ENCODE measurements at regions of chr20 and their contacts with region 1.

Region 1: DNA sequence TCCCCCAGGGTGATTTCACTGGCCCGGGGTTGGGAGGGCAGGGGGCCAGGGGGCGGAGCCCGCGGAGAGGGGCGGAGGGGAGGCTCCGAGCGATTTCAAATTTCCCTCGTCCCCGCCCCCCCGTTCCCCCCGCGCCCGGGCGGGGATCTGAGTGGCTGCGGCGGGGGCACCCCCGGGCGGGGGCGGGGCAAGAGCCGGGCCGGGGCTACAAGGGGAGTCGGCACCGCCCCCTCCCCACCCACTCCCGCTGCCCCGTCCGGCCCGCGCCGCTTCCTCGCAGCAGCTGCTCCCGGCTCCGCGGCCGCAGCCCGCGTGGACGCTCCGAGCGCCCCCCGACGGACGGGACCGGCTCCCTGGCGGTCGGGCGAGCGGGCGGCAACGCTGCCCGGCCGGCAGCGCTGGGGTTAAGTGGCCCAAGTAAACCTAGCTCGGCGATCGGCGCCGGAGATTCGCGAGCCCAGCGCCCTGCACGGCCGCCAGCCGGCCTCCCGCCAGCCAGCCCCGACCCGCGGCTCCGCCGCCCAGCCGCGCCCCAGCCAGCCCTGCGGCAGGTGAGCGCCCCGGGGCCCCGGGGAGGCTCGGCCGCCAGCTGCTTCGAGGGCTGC is at the start of gene DNMT3B:
- DNase-seq: peak; percentile 73
- ATAC-seq: peak; percentile 95
- H3K4me3 ChIP-seq: peak within 1 kb of the TSS; percentile 90
- H3K27ac ChIP-seq: peak within 1 kb of the TSS; percentile 44; the same call in 1 of the 2 replicates
- H3K4me1 ChIP-seq: peaks cover 5% of the 10 kb centered on the region; the same call in 1 of the 2 replicates
- H3K27me3 ChIP-seq: no peaks in the 10 kb centered on the region
- CTCF ChIP-seq: peak; percentile 46
- POLR2A ChIP-seq: no peak
- RAD21 ChIP-seq: peak; percentile 50
- total RNA-seq, gene DNMT3B: 1.3 and 1.4 TPM in 2 replicates

Region 2: DNA sequence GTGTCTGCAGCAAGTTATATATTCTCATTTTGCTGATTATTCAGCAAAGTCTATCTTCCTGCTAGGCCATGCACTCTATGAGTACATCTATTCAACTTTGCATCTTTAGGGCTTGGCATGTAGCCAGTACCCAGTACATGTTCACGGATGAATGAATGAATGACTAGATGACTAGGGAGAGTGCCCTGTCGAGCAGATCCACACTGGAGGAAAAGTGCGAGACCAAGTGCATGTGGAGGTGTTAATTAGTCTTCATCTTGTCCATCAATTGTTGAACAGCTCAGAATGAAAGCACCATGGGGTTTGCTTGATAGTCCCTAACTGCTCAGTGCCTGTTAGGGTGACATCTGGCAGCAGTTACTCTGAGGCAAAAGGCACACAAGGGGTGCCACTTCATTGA is 622.3 kb before region 1 on chr20:
- CTCF ChIA-PET with region 1: no interaction called
- POLR2A ChIA-PET with region 1: no interaction called
- dilution Hi-C with region 1: no loop called
- in situ Hi-C with region 1: no loop called
- intact Hi-C with region 1: no loop called
- DNase-seq: no peak
- ATAC-seq: no peak
- H3K4me3 ChIP-seq: no peak overlapping the region
- H3K27ac ChIP-seq: no peak overlapping the region
- H3K4me1 ChIP-seq: peaks cover 2% of the 10 kb centered on the region
- H3K27me3 ChIP-seq: no peaks in the 10 kb centered on the region
- CTCF ChIP-seq: no peak
- POLR2A ChIP-seq: no peak
- RAD21 ChIP-seq: no peak

Region 3: GRCh38 chr20:32509639-32510066 is 252.6 kb before region 1 on chr20:
- CTCF ChIA-PET with region 1: no interaction called
- POLR2A ChIA-PET with region 1: no interaction called
- dilution Hi-C with region 1: no loop called
- in situ Hi-C with region 1: no loop called
- intact Hi-C with region 1: loop called (anchors 10 kb)
- DNase-seq: peak; percentile 54
- ATAC-seq: peak; percentile 70
- H3K4me3 ChIP-seq: no peak overlapping the region
- H3K27ac ChIP-seq: no peak overlapping the region
- H3K4me1 ChIP-seq: peaks cover 4% of the 10 kb centered on the region; the same call in 1 of the 2 replicates
- H3K27me3 ChIP-seq: no peaks in the 10 kb centered on the region
- CTCF ChIP-seq: peak; percentile 34
- POLR2A ChIP-seq: no peak
- RAD21 ChIP-seq: peak; percentile 34; the same call in 1 of the 2 replicates

Region 4: DNA sequence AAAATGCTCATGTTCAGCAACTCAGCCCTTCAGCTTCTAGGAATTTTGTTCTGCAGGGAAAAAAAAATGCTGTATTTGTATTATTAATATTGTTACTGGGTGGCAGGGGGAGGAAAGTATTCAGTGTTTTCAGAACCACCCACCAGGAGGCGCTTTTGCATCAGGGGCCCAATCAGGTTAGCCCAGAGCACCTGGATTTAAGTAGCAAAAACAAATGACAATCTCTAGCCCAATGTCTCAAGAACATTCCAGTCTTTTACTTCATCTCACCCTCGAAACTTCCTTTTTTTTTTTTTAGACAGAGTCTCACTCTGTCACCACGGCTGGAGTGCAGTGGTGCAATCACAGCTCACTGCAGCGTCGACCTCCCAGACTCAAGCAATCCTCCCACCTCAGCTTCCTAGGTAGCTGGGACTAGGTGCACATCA is 87.9 kb before region 1 on chr20:
- CTCF ChIA-PET with region 1: interaction called, 4 read pairs
- POLR2A ChIA-PET with region 1: no interaction called
- dilution Hi-C with region 1: no loop called
- in situ Hi-C with region 1: no loop called
- intact Hi-C with region 1: loop called (anchors 5 kb)
- DNase-seq: peak; percentile 50
- ATAC-seq: peak; percentile 78
- H3K4me3 ChIP-seq: no peak overlapping the region
- H3K27ac ChIP-seq: no peak overlapping the region
- H3K4me1 ChIP-seq: no peaks in the 10 kb centered on the region
- H3K27me3 ChIP-seq: peaks cover 2% of the 10 kb centered on the region; the same call in 1 of the 2 replicates
- CTCF ChIP-seq: peak; percentile 88
- POLR2A ChIP-seq: 0 out of 2 replicates have a peak, but pooled peaks have one; percentile 38
- RAD21 ChIP-seq: peak; percentile 96

Region 5: GRCh38 chr20:32681175-32682084 is 80.8 kb before region 1 on chr20:
- CTCF ChIA-PET with region 1: interaction called, 3 read pairs
- POLR2A ChIA-PET with region 1: no interaction called
- dilution Hi-C with region 1: no loop called
- in situ Hi-C with region 1: no loop called
- intact Hi-C with region 1: loop called (anchors 2 kb)
- DNase-seq: peak; percentile 17
- ATAC-seq: peak; percentile 55; the same call in 1 of the 2 replicates
- H3K4me3 ChIP-seq: no peak overlapping the region
- H3K27ac ChIP-seq: no peak overlapping the region
- H3K4me1 ChIP-seq: peaks cover 7% of the 10 kb centered on the region
- H3K27me3 ChIP-seq: no peaks in the 10 kb centered on the region
- CTCF ChIP-seq: no peak
- POLR2A ChIP-seq: no peak
- RAD21 ChIP-seq: no peak

Measured in IMR-90 (cell line).